ENCODE measurements at regions of chr4 and their contacts with region 1.

Region 1: DNA sequence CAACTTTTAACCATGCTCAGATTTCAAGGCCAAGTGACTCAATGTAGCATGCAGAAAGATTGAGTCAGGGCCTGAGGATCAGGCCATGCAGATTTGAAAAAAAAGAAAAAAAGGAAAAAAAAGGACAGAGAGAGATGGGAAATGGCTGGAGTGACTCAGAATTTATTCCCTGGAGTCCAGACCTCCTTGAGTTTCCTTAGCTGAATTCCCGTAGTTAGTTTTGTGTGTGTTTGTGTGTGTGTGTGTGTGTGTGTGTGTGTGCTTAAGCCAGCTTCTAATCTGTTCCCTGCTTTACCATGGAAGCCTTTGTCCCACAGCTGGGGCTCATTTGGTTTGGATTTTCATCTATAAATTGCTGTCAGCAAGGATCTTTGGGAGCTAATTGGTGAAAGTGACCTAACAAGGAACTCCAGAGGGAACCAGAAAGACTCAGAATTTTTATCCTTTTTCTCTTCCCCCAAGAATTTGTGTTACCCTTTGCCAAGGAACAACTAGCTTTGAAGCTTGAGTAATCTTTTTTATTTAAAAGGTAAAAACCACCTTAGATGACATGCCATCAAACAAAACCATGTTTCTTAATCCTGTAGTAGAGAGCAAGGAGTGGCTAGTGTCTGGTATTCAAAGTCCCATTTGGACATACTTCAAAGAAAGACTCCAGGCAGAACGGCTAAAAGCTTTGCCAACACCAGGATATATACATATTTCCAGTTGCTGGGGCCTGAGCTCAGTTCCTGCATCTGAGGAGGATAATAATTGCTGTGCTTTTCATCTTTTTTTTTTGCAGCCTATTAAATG is 109.0 kb upstream of the DDIT4L start:
- DNase-seq: peak in 1 of 2 donors; percentile 67
- H3K4me3 ChIP-seq: no peak overlapping the region
- H3K27ac ChIP-seq: peak overlapping the region; percentile 37 to 39
- H3K4me1 ChIP-seq: peaks cover 0 to 22% of the 10 kb centered on the region in 2 donors
- H3K27me3 ChIP-seq: no peaks in the 10 kb centered on the region
- CTCF ChIP-seq: no peak

Region 2: DNA sequence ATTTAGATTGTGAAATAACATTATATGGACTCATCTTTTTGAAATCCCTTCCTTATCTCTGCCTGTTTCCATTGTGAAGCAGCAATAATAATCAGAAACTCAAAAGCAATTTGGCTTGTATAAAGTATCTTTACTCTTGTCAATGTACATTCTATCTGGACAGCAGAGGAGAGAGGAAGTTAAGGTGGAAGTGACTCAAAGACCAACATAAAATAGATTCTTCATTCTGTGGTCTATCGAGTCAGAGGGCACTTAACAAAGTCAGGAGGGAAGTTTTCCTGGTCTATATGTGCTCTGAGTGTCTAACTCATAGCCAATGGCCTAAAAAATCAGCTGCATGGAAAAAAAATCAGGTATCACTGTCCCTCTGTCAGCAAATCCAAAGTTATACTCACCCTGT is 63.1 kb after region 1 on chr4:
- intact Hi-C with region 1: loop called (anchors 5 kb)
- DNase-seq: no peak
- H3K4me3 ChIP-seq: no peak overlapping the region
- H3K27ac ChIP-seq: no peak overlapping the region
- H3K4me1 ChIP-seq: peaks cover 0 to 7% of the 10 kb centered on the region in 2 donors
- H3K27me3 ChIP-seq: no peaks in the 10 kb centered on the region
- CTCF ChIP-seq: no peak